Activated CD4-positive, alpha-beta T cell treated with anti-CD3 and anti-CD28 coated beads for 36 hours (primary cell): ENCODE measurements at regions of chr17 and their contacts with region 1.

Region 1: GRCh38 chr17:27236717-27237315 is 57.1 kb upstream of the WSB1 start:
- DNase-seq: peak; percentile 87
- ATAC-seq: no peak
- H3K4me3 Mint-ChIP-seq: no peak overlapping the region
- H3K27ac Mint-ChIP-seq: no peak overlapping the region
- H3K4me1 Mint-ChIP-seq: peaks cover 15% of the 10 kb centered on the region
- H3K27me3 Mint-ChIP-seq: no peaks in the 10 kb centered on the region

Region 2: DNA sequence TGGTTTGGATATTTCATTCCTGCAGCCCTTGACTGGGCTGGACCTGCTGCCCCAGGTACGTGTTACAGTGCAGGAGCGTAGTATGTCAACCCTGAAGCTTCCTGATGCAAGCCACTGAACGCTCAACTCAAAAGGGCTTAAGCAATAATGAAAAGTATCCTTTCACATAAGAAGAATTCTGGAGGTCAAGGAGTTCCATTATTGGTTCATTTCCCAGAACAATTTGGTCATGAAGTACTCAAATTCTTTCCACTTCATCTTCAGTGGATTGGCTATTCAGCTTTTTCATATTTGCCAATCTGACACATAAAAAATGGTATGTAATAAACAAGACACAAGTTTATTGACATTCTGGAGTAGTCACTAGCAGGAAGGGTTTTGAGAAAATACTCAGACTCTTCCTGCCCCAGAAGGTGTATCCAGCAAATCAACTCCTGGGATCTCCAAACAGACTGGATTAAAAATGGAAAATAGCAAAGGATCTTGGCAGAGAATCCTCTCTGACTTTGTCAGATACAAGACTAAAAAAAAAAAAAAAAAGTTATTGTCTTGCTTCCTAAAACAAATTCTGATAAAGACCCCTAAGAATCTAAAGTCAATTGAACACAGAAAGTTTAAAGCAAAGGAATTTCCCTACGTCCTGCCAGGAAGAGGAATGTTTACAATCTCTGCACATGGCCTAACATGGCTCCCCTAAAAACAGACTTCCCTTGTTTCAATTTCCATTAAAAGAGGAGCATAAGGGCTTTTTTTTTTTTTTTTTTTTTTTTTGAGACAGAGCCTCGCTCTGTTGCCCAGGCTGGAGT is 19.6 kb after region 1 on chr17:
- CTCF ChIA-PET with region 1: interaction called, 19 read pairs
- POLR2A ChIA-PET with region 1: no interaction called
- intact Hi-C with region 1: no loop called
- DNase-seq: no peak
- ATAC-seq: no peak
- H3K4me3 Mint-ChIP-seq: no peak overlapping the region
- H3K27ac Mint-ChIP-seq: no peak overlapping the region
- H3K4me1 Mint-ChIP-seq: no peaks in the 10 kb centered on the region
- H3K27me3 Mint-ChIP-seq: peaks cover 3% of the 10 kb centered on the region

Region 3: DNA sequence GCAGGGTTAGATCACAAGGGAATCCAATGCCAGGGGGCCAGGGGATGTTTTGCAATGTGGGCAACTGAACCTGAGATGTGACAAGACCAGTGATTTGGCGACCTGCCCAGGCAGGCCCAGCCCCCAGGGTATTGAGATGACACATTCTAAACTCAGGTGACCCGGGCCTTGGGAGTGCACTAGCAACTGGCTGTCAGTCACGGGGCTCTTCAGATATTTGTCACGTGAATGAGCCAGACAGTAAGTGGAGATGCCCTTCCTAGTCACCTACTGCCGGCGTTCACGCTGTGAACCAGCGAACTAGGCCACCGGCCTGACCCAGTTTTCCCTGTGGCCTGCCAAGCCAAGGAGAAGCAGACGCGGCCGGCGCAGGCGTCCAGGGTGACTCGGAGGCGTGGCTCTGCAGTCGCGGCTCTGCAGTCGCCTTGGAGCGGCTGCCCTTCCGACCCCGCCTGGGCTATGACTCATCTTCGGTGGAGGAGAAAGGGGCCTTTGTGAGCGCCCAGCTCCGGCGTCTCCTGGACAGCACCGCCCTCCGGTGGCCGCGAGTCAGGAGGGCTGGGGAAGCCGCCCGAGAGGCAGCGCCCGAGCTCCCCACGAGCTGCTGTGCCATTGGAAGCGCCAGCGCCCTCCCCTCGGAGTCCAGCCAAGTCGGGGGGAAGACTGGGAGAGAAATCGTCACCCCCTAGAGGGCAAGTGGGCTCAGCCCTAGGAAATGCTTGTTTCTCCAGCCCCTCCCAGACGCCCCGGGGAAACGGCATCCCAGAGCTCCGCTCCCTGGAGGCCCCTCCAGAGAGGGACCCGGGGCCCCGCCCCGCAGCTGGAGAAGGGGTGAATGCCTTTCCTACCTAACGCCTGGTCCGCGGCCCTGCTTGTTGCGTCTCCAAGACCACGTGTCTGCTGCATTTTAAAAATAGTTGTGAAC is 95.9 kb after region 1 on chr17:
- CTCF ChIA-PET with region 1: interaction called, 120 read pairs
- POLR2A ChIA-PET with region 1: interaction called, 4 read pairs
- intact Hi-C with region 1: loop called (anchors 1 kb)
- DNase-seq: peak; percentile 96
- ATAC-seq: peak; percentile 90
- H3K4me3 Mint-ChIP-seq: peak overlapping the region; percentile 79
- H3K27ac Mint-ChIP-seq: peak overlapping the region; percentile 93
- H3K4me1 Mint-ChIP-seq: peaks cover 18% of the 10 kb centered on the region
- H3K27me3 Mint-ChIP-seq: no peaks in the 10 kb centered on the region

Region 4: DNA sequence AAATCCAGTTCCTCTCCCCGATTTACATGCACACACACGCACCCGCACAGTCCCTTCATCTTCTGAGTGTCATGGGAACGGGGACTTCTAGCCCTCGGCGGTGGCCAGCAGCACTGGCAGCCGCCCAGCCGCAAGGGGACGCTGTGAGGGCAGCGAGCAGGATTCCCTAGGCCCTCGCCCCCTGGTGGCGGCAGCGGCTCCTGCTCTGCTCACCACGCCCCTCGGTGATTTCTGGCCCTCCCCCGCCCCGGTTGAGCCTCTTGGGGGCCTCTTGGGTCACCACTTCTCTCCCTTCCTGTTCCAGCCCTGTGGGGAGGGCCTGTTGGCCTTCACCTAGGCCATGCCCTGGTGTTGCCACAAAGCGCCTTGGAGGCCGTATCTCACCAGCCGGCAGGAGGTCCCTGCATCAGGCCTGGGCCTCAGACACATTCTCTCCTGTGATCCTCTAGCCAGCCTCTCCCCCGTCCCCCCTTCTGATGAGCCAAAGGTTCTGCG is 144.2 kb after region 1 on chr17:
- CTCF ChIA-PET with region 1: interaction called, 17 read pairs
- POLR2A ChIA-PET with region 1: no interaction called
- intact Hi-C with region 1: loop called in 1 of 2 experiments (anchors 1 kb)
- DNase-seq: peak; percentile 94
- ATAC-seq: peak; percentile 96
- H3K4me3 Mint-ChIP-seq: no peak overlapping the region
- H3K27ac Mint-ChIP-seq: no peak overlapping the region
- H3K4me1 Mint-ChIP-seq: peaks cover 2% of the 10 kb centered on the region
- H3K27me3 Mint-ChIP-seq: peaks cover 23% of the 10 kb centered on the region

Region 5: DNA sequence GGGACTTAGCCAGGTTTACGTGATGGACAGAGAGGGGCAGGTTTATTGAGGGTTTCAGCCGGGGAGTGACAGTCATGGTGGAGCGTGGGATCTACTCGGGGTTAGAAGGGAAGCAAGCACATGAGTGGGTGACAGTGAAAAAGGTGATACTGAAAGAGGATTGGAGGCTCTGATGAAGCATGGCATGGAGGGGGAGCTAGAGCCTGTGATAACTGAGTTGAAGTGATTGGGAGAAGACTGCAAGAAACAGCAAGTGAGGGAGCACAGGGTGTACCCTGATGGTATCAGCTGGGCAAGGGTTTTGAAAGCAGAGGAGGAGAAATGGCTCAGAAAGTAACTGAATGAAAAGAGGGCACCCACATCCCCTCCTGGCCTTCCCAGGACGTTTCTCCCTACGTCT is 212.7 kb after region 1 on chr17:
- CTCF ChIA-PET with region 1: no interaction called
- POLR2A ChIA-PET with region 1: no interaction called
- intact Hi-C with region 1: no loop called
- DNase-seq: no peak
- ATAC-seq: no peak
- H3K4me3 Mint-ChIP-seq: no peak overlapping the region
- H3K27ac Mint-ChIP-seq: no peak overlapping the region
- H3K4me1 Mint-ChIP-seq: peaks cover 7% of the 10 kb centered on the region
- H3K27me3 Mint-ChIP-seq: no peaks in the 10 kb centered on the region

Region 6: GRCh38 chr17:27466743-27467375 is 230.0 kb after region 1 on chr17:
- CTCF ChIA-PET with region 1: no interaction called
- POLR2A ChIA-PET with region 1: no interaction called
- intact Hi-C with region 1: loop called in 1 of 2 experiments (anchors 2 kb)
- DNase-seq: peak; percentile 91
- ATAC-seq: peak; percentile 84
- H3K4me3 Mint-ChIP-seq: peak overlapping the region; percentile 71
- H3K27ac Mint-ChIP-seq: peak overlapping the region; percentile 96
- H3K4me1 Mint-ChIP-seq: peaks cover 93% of the 10 kb centered on the region
- H3K27me3 Mint-ChIP-seq: no peaks in the 10 kb centered on the region

Region 7: DNA sequence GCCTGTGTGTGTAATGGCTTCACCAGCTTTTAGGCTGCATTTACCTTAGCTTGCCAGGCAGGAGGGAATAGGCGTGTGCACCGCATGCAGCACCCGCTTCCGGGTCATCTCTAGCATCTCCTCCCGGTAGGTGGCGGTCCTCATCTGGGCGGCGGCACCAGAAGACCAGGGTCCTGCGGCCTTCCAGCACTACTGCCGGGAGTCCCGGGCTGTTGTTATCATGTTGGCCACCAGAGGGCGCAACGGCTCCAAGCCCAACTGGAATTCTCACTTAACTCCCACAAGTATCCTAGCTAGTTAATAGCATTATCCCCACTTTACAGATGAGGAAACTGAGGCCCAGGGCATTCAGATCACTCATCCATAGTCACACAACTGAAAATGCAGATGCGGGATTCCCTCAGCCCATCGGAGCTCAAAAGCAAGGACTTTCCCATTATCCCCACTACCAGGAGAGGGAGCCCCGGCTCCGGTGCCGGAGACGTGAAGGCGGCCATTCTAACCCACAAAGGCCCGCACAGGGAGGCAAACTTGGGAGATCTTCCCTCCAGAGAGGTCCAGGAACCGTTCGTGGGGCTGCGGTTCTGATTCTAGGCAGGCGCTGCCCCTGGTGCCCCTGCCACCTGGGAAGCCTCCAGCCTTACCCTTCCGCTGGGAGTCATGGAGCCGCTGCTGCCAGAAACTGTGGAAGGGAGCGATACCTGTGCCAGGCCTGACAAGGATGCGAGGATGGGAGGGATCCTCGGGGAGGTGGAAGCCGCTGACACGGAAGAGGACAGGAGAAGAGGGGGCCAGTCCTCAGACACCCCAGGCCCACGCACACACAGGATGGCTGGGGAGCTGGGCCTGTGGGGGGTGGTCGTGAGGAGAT is 418.1 kb after region 1 on chr17:
- CTCF ChIA-PET with region 1: interaction called, 17 read pairs
- POLR2A ChIA-PET with region 1: interaction called, 6 read pairs
- intact Hi-C with region 1: loop called (anchors 1 to 5 kb)
- DNase-seq: peak; percentile 87
- ATAC-seq: peak; percentile 92
- H3K4me3 Mint-ChIP-seq: no peak overlapping the region
- H3K27ac Mint-ChIP-seq: no peak overlapping the region
- H3K4me1 Mint-ChIP-seq: peaks cover 7% of the 10 kb centered on the region
- H3K27me3 Mint-ChIP-seq: no peaks in the 10 kb centered on the region